ENCODE measurements at regions of chr20 and their contacts with region 1.

Region 1: GRCh38 chr20:50588034-50588611 is 77.9 kb downstream of the PTPN1 start:
- DNase-seq: no peak
- H3K4me3 ChIP-seq: no peak overlapping the region
- CTCF ChIP-seq: peak; percentile 94

Region 2: DNA sequence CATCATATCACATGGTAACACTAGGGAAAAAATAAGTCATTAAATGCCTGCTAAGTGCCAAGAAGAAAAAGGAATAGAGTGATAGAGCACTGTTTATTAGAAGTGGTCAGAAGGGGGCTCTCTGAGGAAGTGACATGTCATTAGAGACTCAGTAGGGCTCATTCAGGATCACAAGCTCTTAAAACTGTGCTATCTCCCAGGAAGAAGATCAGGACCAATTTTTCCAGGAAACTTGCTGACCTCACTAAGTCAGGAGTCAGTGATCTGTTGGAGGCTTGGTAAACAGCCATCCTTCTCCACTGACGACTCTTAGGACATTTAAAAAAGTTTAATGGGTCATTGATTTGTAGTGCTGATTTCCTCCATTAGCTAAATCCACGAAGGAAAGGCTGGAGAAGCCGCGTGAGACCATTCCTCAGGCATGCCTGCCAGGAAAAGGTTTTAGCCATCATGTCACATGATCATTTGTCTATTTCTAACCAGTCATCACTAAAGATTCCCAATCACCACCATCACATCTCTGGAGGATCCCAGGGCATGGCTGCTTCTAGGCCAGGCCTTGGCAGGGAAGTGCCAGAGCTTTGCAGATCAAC is 83.8 kb before region 1 on chr20:
- CTCF ChIA-PET with region 1: interaction called, 12 read pairs
- POLR2A ChIA-PET with region 1: no interaction called
- DNase-seq: no peak
- H3K4me3 ChIP-seq: no peak overlapping the region
- CTCF ChIP-seq: no peak

Region 3: GRCh38 chr20:50561379-50562078 is 26.6 kb before region 1 on chr20:
- CTCF ChIA-PET with region 1: interaction called, 16 read pairs
- POLR2A ChIA-PET with region 1: no interaction called
- DNase-seq: peak; percentile 87
- H3K4me3 ChIP-seq: no peak overlapping the region; the same call in 1 of the 2 replicates
- CTCF ChIP-seq: no peak

Region 4: DNA sequence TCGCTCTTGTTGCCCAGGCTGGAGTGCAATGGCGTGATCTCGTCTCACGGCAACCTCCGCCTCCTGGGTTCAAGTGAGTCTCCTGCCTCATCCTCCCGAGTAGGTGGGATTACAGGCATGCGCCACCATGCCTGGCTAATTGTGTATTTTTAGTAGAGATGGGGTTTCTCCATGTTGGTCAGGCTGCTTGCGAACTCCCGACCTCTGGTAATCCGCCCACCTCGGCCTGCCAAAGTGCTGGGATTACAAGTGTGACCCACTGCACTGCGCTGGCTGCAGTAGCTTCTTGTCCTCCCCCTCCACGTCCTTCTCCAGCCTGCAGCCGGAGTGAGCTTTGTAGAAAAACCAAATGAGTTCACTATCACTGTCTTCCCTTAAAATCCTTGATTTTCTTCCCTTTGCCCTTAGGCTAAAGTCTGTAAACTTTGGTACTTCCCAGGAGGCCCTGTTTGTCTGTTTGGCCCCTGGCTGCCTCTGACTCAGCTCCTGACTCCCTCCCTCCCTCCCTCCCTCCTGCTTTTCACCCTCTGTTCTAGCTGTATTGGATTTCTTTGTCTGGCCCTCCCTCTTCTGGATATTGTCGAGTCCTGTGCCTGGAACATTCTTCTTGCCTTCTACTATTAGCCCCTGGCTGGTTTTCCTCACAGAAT is 156.1 kb after region 1 on chr20:
- CTCF ChIA-PET with region 1: interaction called, 74 read pairs
- POLR2A ChIA-PET with region 1: no interaction called
- DNase-seq: no peak
- H3K4me3 ChIP-seq: no peak overlapping the region
- CTCF ChIP-seq: peak; percentile 30

Measured in AG04449 (cell line).